Ascending aorta (tissue), 2 donors: ENCODE measurements at regions of chr3 and their contacts with region 1.

Region 1: DNA sequence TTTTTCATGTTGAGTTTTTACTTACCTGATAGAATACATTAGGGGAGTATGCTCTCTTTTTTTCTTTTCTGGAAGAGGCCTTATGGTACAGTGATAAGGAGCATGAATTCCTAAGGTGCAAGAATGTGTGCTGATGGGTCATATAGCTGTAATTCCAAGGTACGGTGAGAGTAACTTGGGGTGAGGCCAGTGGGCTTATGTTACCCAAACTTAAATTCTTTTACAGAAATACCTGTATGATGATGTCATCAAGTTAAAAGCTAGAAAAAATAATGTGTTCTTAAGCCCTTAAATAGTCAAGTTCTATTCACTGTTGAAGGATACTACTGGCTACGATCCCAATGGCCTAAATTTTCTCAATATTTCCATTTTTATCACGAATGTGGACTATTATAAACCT is 111.2 kb downstream of the GMPS start:
- DNase-seq: no peak
- H3K4me3 ChIP-seq: no peak overlapping the region
- H3K27ac ChIP-seq: peak overlapping the region; percentile 5 to 57
- H3K4me1 ChIP-seq: peaks cover 0 to 9% of the 10 kb centered on the region in 2 donors
- H3K27me3 ChIP-seq: no peaks in the 10 kb centered on the region
- CTCF ChIP-seq: no peak

Region 2: DNA sequence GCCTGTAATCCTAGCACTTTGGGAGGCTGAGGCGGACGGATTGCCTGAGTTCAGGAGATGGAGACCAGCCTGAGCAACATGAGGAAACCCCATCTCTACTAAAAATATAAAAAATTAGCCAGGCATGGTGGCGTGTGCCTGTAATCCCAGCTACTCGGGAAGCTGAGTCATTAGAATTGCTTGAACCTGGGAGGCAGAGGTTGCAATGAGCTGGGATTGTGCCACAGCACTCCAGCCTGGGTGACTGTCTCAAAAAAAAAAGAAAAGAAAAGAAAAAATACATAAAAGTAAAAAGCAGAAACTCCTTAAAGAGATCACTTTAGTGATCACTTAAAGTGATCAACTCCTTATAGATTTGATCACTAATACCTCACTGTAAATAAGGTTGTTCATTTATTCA is 33.2 kb before region 1 on chr3:
- intact Hi-C with region 1: loop called (anchors 2 kb)
- DNase-seq: no peak
- H3K4me3 ChIP-seq: no peak overlapping the region
- H3K27ac ChIP-seq: no peak overlapping the region
- H3K4me1 ChIP-seq: peaks cover 0 to 4% of the 10 kb centered on the region in 2 donors
- H3K27me3 ChIP-seq: no peaks in the 10 kb centered on the region
- CTCF ChIP-seq: no peak